HepG2 (cell line): ENCODE measurements at regions of chr2 and their contacts with region 1.

Region 1: DNA sequence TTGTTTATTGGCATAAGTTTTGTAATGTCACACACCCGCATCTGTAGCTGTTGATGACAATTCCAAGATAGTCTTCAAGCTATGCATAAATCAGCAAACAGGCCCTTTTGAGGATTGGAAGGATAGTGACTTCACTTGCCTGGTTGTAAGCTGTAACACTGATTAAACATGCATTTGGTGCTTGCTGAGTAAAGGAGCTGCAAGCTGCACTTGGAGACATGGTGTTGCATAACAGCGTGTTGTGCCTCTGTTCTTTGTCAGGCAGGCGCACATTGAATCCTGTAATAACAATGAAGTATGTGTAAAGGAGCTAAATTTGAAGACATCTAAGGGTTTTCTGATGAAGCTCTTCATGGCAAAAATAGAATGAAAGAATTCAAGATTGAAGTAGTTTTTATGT is 68.7 kb upstream of the TTC27 start:
- DNase-seq: no peak
- ATAC-seq: no peak
- H3K4me3 ChIP-seq: no peak overlapping the region
- H3K27ac ChIP-seq: no peak overlapping the region
- H3K4me1 ChIP-seq: no peaks in the 10 kb centered on the region
- H3K27me3 ChIP-seq: no peaks in the 10 kb centered on the region
- CTCF ChIP-seq: no peak
- EP300 ChIP-seq: no peak
- POLR2A ChIP-seq: no peak
- RAD21 ChIP-seq: no peak

Region 2: DNA sequence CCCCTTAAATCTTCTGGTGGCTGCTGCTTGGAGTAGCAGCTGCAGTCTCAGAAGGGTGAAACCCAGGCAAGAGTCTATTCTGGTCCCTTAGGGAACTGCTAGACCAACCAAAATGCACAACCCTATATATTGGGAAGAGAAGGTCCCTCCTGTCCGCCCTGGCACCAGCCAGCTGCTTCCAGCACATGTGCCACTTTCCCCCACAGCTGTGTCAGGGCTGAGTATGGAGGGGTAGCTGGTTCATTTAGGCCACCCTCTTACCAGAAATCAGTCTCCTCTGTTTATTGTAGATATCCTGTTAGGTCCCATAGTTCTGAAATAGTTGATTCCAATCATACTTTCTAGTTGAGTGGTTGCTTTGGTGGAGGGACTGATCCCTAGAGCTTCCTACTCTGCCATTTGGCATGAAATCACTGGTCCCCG is 133.4 kb before region 1 on chr2:
- CTCF ChIA-PET with region 1: no interaction called
- POLR2A ChIA-PET with region 1: no interaction called
- in situ Hi-C with region 1: no loop called
- intact Hi-C with region 1: no loop called
- DNase-seq: no peak
- ATAC-seq: peak; percentile 49
- H3K4me3 ChIP-seq: no peak overlapping the region
- H3K27ac ChIP-seq: no peak overlapping the region
- H3K4me1 ChIP-seq: peaks cover 18% of the 10 kb centered on the region
- H3K27me3 ChIP-seq: no peaks in the 10 kb centered on the region
- CTCF ChIP-seq: no peak
- EP300 ChIP-seq: no peak
- POLR2A ChIP-seq: no peak
- RAD21 ChIP-seq: no peak

Region 3: GRCh38 chr2:32496662-32497061 is 62.5 kb before region 1 on chr2:
- CTCF ChIA-PET with region 1: no interaction called
- POLR2A ChIA-PET with region 1: no interaction called
- in situ Hi-C with region 1: no loop called
- intact Hi-C with region 1: no loop called
- DNase-seq: no peak
- ATAC-seq: no peak
- H3K4me3 ChIP-seq: no peak overlapping the region
- H3K27ac ChIP-seq: no peak overlapping the region
- H3K4me1 ChIP-seq: 0 out of 2 replicates have a peak, but pooled peaks cover 8% of the 10 kb centered on the region
- H3K27me3 ChIP-seq: no peaks in the 10 kb centered on the region
- CTCF ChIP-seq: no peak
- EP300 ChIP-seq: no peak
- POLR2A ChIP-seq: no peak
- RAD21 ChIP-seq: no peak

Region 4: GRCh38 chr2:32627814-32628579 is 68.9 kb after region 1 on chr2 and contains the start of gene TTC27:
- CTCF ChIA-PET with region 1: no interaction called
- POLR2A ChIA-PET with region 1: no interaction called
- in situ Hi-C with region 1: no loop called
- intact Hi-C with region 1: loop called (anchors 1 kb)
- DNase-seq: peak; percentile 96
- ATAC-seq: peak; percentile 98
- H3K4me3 ChIP-seq: peak within 1 kb of the TSS; percentile 73 to 98 (median 96)
- H3K27ac ChIP-seq: peak within 1 kb of the TSS; percentile 66
- H3K4me1 ChIP-seq: peaks cover 29% of the 10 kb centered on the region
- H3K27me3 ChIP-seq: peaks cover 0 to 4% of the 10 kb centered on the region in 2 experiments; a peak in 1 of 5 replicates
- CTCF ChIP-seq: peak; percentile 14; the same call in 1 of the 2 replicates
- EP300 ChIP-seq: no peak
- POLR2A ChIP-seq: peak; percentile 84 to 91
- RAD21 ChIP-seq: no peak; the same call in 1 of the 2 replicates
- total RNA-seq, gene TTC27: 44.7 and 65.1 TPM in 2 replicates